GM12878 (cell line): ENCODE measurements at regions of chr1 and their contacts with region 1.

Region 1: GRCh38 chr1:220294846-220295301 is 22.6 kb upstream of the RAB3GAP2 start:
- DNase-seq: no peak
- ATAC-seq: no peak
- H3K4me3 ChIP-seq: no peak overlapping the region
- H3K27ac ChIP-seq: no peak overlapping the region
- H3K4me1 ChIP-seq: no peaks in the 10 kb centered on the region
- H3K27me3 ChIP-seq: no peaks in the 10 kb centered on the region
- CTCF ChIP-seq: no peak
- EP300 ChIP-seq: no peak
- POLR2A ChIP-seq: no peak
- RAD21 ChIP-seq: no peak

Region 2: DNA sequence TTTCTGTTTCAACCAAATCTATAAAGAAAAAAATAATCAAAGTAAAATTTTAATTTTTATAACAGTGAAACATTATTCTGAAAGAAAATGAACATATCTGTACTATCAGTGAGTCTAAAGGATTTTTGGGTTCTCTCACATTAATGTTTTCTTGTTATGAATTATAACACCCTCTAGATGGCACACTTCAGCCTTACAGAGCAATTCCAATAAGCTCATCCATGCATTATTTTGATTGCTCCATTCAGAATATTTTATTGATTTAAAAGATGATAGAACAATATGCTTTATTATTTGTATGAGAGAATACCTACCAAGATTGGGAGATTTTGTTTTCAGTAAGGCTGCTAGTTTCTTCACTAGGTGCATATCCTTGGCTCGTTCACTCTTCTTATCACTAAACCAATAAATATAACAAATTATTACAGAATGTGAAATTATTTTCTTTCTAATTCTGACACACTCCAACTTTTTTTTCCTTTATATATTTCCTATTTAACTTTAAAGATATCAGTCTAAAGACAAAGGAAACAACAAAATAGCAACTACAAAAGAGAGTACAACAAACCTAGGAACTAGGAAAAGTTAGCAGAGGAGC is 105.0 kb before region 1 on chr1:
- CTCF ChIA-PET with region 1: interaction called, 14 read pairs
- POLR2A ChIA-PET with region 1: no interaction called
- RAD21 ChIA-PET with region 1: interaction called, 3 read pairs
- SMC1A ChIA-PET with region 1: no interaction called
- in situ Hi-C with region 1: no loop called
- intact Hi-C with region 1: no loop called
- DNase-seq: no peak
- ATAC-seq: peak; percentile 67
- H3K4me3 ChIP-seq: no peak overlapping the region
- H3K27ac ChIP-seq: no peak overlapping the region
- H3K4me1 ChIP-seq: no peaks in the 10 kb centered on the region
- H3K27me3 ChIP-seq: no peaks in the 10 kb centered on the region
- CTCF ChIP-seq: peak in 2 of 3 experiments; percentile 34 to 53; a peak in 3 of 6 replicates
- EP300 ChIP-seq: no peak
- POLR2A ChIP-seq: no peak
- RAD21 ChIP-seq: peak; percentile 47; the same call in 1 of the 2 replicates

Region 3: DNA sequence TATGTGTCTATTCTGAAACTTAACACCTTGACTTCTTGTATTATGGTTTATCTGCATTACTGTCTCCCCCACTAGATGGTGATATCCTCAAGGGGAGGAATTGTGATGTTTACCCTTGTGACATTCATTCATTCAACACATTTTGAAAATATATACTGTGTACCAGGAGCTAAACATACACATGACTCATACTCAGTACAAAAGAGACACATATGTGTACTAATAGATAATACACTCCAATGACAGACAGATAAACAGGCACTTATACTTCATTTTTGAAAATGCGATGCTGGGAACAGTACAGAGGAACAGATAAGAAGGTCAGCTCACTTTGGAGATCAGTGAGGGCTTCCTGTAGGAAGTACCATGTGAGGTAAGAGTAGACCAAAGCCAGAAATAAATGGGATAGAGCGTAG is 13.7 kb before region 1 on chr1:
- CTCF ChIA-PET with region 1: interaction called, 49 read pairs
- POLR2A ChIA-PET with region 1: interaction called, 4 read pairs
- RAD21 ChIA-PET with region 1: interaction called, 14 read pairs
- SMC1A ChIA-PET with region 1: interaction called, 12 read pairs
- in situ Hi-C with region 1: no loop called
- intact Hi-C with region 1: no loop called
- DNase-seq: no peak
- ATAC-seq: peak; percentile 78
- H3K4me3 ChIP-seq: no peak overlapping the region
- H3K27ac ChIP-seq: no peak overlapping the region
- H3K4me1 ChIP-seq: no peaks in the 10 kb centered on the region
- H3K27me3 ChIP-seq: peaks cover 0 to 2% of the 10 kb centered on the region in 2 experiments; a peak in 1 of 4 replicates
- CTCF ChIP-seq: peak; percentile 24 to 52 (median 40); a peak in 5 of 6 replicates
- EP300 ChIP-seq: no peak
- POLR2A ChIP-seq: no peak
- RAD21 ChIP-seq: peak; percentile 77

Region 4: GRCh38 chr1:220315070-220315839 is 20.4 kb after region 1 on chr1:
- CTCF ChIA-PET with region 1: interaction called, 12 read pairs
- POLR2A ChIA-PET with region 1: no interaction called
- RAD21 ChIA-PET with region 1: no interaction called
- SMC1A ChIA-PET with region 1: no interaction called
- in situ Hi-C with region 1: no loop called
- intact Hi-C with region 1: no loop called
- DNase-seq: no peak
- ATAC-seq: no peak
- H3K4me3 ChIP-seq: no peak overlapping the region
- H3K27ac ChIP-seq: no peak overlapping the region
- H3K4me1 ChIP-seq: no peaks in the 10 kb centered on the region
- H3K27me3 ChIP-seq: peaks cover 0 to 1% of the 10 kb centered on the region in 2 experiments; a peak in 2 of 4 replicates
- CTCF ChIP-seq: no peak
- EP300 ChIP-seq: no peak
- POLR2A ChIP-seq: no peak
- RAD21 ChIP-seq: no peak